ENCODE measurements at regions of chr1 and their contacts with region 1.

Region 1: DNA sequence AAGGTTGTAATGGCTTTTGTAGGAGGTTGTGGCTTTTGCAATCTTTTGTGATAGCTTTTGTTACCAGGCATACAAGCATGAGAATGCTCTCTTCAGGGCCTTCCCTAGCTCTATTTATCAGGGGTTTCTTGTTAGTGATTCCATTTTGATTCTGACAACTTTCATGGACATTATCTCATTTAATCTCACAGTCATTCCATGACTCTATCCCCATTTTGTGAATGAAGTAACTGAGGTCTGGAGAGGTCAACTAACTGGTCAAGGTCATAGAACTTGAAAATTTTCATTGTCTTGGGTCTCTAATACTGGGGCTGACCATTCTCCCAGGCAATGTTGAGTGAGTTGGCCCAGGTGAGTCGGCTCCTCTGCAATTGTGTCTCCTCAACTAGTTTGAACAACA is 11.2 kb upstream of the LAMTOR5 start:
- DNase-seq: no peak
- ATAC-seq: no peak
- H3K4me3 ChIP-seq: no peak overlapping the region
- H3K27ac ChIP-seq: no peak overlapping the region
- H3K4me1 ChIP-seq: peaks cover 3% of the 10 kb centered on the region
- H3K27me3 ChIP-seq: no peaks in the 10 kb centered on the region

Region 2: GRCh38 chr1:110449661-110450651 is 31.2 kb after region 1 on chr1:
- intact Hi-C with region 1: loop called in 1 of 4 experiments (anchors 5 kb)
- DNase-seq: no peak
- ATAC-seq: no peak
- H3K4me3 ChIP-seq: no peak overlapping the region
- H3K27ac ChIP-seq: no peak overlapping the region
- H3K4me1 ChIP-seq: no peaks in the 10 kb centered on the region
- H3K27me3 ChIP-seq: no peaks in the 10 kb centered on the region

Region 3: DNA sequence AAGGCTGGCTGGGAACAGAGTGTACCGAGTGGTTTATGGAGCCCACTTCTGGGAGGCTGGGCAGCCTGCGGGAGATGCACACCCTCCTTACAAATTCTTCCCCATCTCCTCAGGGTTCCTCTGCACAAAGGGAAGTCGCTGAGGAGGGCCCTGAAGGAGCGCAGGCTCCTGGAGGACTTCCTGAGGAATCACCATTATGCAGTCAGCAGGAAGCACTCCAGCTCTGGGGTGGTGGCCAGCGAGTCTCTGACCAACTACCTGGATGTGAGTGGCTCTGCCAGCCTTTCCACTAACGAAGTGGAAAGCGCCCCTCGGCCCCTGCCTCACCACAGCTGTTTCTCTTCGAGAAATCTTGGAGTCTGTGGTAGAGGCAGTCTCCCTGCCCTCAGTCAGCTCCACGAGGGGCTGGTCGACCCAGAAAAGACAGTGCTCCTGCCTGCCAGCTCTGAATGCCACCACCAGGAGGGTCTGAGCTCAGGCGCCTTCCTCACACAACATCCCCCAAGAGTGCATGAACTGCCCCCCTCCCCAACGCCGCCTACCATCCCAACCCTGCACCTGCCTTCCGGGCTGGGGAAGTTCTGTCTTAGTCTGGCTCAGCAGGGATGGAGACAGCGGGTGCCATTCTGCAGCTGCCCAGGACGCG is 64.1 kb after region 1 on chr1:
- intact Hi-C with region 1: no loop called
- DNase-seq: no peak
- ATAC-seq: no peak
- H3K4me3 ChIP-seq: no peak overlapping the region
- H3K27ac ChIP-seq: no peak overlapping the region
- H3K4me1 ChIP-seq: peaks cover 3% of the 10 kb centered on the region
- H3K27me3 ChIP-seq: no peaks in the 10 kb centered on the region